GM12878 (cell line): ENCODE measurements at regions of chr2 and their contacts with region 1.

Region 1: DNA sequence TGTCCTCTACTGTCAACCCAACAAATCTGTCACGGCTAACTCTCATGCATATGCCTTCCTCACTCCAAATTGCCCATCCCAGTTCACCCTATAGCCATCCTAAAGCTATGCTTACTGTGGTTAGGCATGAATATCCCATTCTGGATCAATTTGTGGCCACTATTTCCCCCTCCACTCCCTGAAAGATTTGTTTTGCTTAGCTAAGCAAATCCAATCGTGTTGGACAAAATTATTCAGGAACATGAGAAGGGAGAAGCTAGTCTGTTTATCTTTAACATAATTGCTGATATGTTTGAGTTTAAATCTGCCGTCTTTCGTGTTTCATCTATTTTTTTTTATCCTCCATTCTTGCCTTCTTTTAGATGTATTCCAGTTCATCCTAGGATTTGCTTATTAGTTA is 43.6 kb downstream of the PPM1B start:
- DNase-seq: no peak
- ATAC-seq: no peak
- H3K4me3 ChIP-seq: no peak overlapping the region
- H3K27ac ChIP-seq: no peak overlapping the region
- H3K4me1 ChIP-seq: no peaks in the 10 kb centered on the region
- H3K27me3 ChIP-seq: no peaks in the 10 kb centered on the region
- CTCF ChIP-seq: no peak
- EP300 ChIP-seq: no peak
- POLR2A ChIP-seq: no peak
- RAD21 ChIP-seq: no peak

Region 2: GRCh38 chr2:44201648-44202165 is 10.6 kb before region 1 on chr2:
- CTCF ChIA-PET with region 1: interaction called, 5 read pairs
- POLR2A ChIA-PET with region 1: interaction called, 3 read pairs
- RAD21 ChIA-PET with region 1: interaction called, 5 read pairs
- SMC1A ChIA-PET with region 1: interaction called, 21 read pairs
- in situ Hi-C with region 1: no loop called
- intact Hi-C with region 1: no loop called
- DNase-seq: no peak
- ATAC-seq: no peak
- H3K4me3 ChIP-seq: no peak overlapping the region
- H3K27ac ChIP-seq: no peak overlapping the region
- H3K4me1 ChIP-seq: no peaks in the 10 kb centered on the region
- H3K27me3 ChIP-seq: no peaks in the 10 kb centered on the region
- CTCF ChIP-seq: no peak
- EP300 ChIP-seq: no peak
- POLR2A ChIP-seq: no peak
- RAD21 ChIP-seq: no peak